Endothelial cell of umbilical vein (primary cell): ENCODE measurements at regions of chr6 and their contacts with region 1.

Region 1: GRCh38 chr6:116111552-116112528 is 11.2 kb downstream of the NT5DC1 start:
- DNase-seq: peak; percentile 46
- H3K4me3 ChIP-seq: no peak overlapping the region
- H3K27ac ChIP-seq: no peak overlapping the region
- H3K4me1 ChIP-seq: no peaks in the 10 kb centered on the region
- H3K27me3 ChIP-seq: no peaks in the 10 kb centered on the region
- CTCF ChIP-seq: peak; percentile 56 to 69
- POLR2A ChIP-seq: no peak

Region 2: GRCh38 chr6:116133453-116133852 is 21.6 kb after region 1 on chr6:
- CTCF ChIA-PET with region 1: interaction called, 11 read pairs
- POLR2A ChIA-PET with region 1: no interaction called
- dilution Hi-C with region 1: no loop called
- intact Hi-C with region 1: no loop called
- DNase-seq: no peak
- H3K4me3 ChIP-seq: no peak overlapping the region
- H3K27ac ChIP-seq: no peak overlapping the region
- H3K4me1 ChIP-seq: no peaks in the 10 kb centered on the region
- H3K27me3 ChIP-seq: no peaks in the 10 kb centered on the region
- CTCF ChIP-seq: no peak
- POLR2A ChIP-seq: no peak